Heart left ventricle (tissue), 16 donors: ENCODE measurements at regions of chr17 and their contacts with region 1.

Region 1: GRCh38 chr17:2688351-2689342 is 22.9 kb downstream of the CLUH start:
- DNase-seq: peak in 3 of 5 donors; percentile 16 to 64 (median 33)
- ATAC-seq: peak; percentile 19 to 42 (median 24)
- H3K4me3 ChIP-seq: no peak overlapping the region
- H3K27ac ChIP-seq: peak overlapping the region in 10 of 12 donors; percentile 5 to 81 (median 28)
- H3K4me1 ChIP-seq: peaks cover 0 to 52% (median 24%) of the 10 kb centered on the region in 12 donors
- H3K27me3 ChIP-seq: no peaks in the 10 kb centered on the region
- CTCF ChIP-seq: no peak
- POLR2A ChIP-seq: no peak

Region 2: DNA sequence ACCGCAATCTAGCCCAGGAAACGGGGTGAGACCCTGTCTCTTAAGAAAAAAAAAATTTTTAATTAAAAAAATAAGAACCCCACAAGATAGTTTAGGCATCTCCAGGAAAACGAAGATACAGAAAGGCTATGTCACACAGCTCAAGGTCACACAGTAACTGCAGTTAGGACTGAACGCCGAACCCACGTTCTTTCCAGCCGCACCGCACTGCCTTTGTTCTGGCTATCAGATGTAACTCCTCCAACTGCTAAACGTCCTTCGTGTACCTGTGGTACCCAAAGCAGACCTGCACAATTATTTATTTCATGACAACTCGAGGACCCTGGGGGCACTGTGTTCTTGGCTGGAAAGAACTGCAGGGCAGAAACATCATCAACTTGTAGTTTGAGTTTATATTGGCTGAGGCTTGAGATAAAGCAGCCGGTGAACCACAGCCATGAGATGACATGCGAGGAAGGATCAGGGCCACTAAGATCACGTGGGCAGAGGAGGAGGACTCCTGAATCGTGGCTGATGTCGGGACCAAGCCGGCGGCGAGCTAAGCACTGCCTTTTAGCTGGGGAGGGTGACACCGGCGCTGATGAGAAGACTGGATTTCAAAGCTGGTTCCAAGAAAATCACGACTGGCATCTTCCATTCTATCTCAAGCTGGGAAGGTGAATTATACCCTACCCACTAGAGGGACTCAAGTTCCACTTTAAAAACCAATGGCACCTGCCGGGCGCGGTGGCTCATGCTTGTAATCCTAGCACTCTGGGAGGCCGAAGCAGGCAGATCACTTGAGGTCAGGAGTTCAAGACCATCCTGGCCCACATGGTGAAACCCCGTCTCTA is 267.1 kb before region 1 on chr17:
- intact Hi-C with region 1: loop called in 1 of 10 experiments (anchors 10 kb)
- DNase-seq: no peak
- ATAC-seq: peak in 2 of 4 donors; percentile 10 to 39
- H3K4me3 ChIP-seq: no peak overlapping the region
- H3K27ac ChIP-seq: peak overlapping the region in 1 of 12 donors; percentile 34
- H3K4me1 ChIP-seq: peaks cover 0 to 18% (median 3%) of the 10 kb centered on the region in 12 donors
- H3K27me3 ChIP-seq: no peaks in the 10 kb centered on the region
- CTCF ChIP-seq: peak in 2 of 12 donors; percentile 14 to 19
- POLR2A ChIP-seq: no peak

Region 3: GRCh38 chr17:2511462-2512369 is 176.9 kb before region 1 on chr17 and contains the start of gene METTL16:
- intact Hi-C with region 1: loop called in 4 of 10 experiments (anchors 10 kb)
- DNase-seq: peak; percentile 96 to 99 (median 97)
- ATAC-seq: peak; percentile 99 to 100 (median 100)
- H3K4me3 ChIP-seq: peak within 1 kb of the TSS; percentile 44 to 85 (median 72)
- H3K27ac ChIP-seq: peak within 1 kb of the TSS; percentile 81 to 95 (median 87)
- H3K4me1 ChIP-seq: peaks cover 4 to 35% (median 23%) of the 10 kb centered on the region in 12 donors
- H3K27me3 ChIP-seq: no peaks in the 10 kb centered on the region
- CTCF ChIP-seq: no peak
- POLR2A ChIP-seq: peak in 1 of 2 donors; percentile 60
- total RNA-seq, gene METTL16: 13.9 to 32.0 (median 24.6) TPM